ENCODE measurements at regions of chr5 and their contacts with region 1.

Region 1: GRCh38 chr5:59174248-59174844 is 591.5 kb downstream of the RAB3C start:
- DNase-seq: peak; percentile 61

Region 2: DNA sequence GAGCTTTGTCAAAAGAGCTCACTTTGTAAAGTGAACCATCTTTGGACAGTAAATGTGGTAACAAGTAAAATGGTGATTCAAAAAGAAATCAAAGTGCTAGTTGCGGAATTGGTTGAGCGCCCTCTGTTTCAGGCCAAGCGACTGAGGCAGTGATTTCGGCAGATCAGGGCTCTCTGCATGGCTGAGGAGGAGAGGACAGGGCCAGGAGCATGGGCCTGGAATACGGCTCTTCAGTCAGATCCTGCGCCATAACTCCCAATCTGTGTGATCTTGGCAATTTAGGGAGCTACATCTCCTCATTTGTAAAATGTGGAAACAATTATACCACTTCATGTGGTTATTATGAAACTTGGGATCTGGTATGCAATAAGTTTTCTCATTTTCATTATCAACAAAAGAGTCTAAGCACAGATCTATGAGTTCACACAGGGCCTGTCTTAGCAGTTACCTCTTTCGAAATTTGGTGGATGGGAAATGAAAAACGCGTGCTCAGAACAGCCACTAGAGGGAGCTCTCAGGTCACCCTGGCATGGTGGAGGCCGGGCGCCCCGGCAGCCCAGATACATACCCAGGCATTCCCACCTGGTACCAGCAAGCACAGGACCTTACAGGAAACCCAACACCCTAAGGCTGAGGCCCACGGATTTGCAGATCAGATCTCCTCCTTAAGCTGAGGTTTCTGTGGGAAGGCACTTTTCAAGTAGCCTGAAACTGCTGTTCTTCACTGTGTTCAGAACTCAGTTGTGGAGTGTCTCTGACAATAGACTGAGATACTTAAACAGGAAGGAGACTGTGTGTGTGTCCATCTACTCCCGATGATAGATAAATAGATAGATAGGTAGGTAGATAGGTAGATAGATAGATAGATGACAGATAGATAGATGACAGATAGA is 287.8 kb before region 1 on chr5:
- in situ Hi-C with region 1: loop called (anchors 25 kb)
- DNase-seq: peak; percentile 79

Region 3: DNA sequence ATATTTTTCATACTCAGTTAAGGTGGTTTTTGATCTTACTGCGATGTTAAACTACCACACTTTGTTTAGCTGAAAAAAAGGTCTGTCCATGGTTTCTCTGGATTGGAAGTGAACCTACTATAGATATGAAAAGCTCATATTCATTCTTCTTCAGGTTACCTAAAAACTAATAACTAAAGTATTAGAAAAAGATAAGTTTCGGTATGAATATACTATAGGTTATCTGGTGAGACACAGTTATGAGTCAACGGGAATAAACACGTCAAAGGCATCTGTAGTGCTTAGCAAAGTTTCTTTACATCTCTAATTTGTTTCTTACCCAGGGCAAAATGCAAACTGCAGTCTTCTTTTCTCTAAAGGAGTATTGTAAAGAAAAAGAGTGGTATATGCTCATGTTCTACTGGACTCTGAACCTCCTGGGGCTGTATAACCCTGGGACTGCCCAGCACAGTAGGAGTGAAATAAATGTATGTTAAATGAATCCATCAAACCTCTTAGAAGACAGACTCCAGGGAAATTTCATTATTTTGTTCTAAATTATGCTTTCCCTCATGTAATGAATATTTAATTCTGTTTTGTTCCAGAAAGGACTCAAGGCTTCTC is 197.3 kb after region 1 on chr5:
- in situ Hi-C with region 1: no loop called
- DNase-seq: no peak

Region 4: DNA sequence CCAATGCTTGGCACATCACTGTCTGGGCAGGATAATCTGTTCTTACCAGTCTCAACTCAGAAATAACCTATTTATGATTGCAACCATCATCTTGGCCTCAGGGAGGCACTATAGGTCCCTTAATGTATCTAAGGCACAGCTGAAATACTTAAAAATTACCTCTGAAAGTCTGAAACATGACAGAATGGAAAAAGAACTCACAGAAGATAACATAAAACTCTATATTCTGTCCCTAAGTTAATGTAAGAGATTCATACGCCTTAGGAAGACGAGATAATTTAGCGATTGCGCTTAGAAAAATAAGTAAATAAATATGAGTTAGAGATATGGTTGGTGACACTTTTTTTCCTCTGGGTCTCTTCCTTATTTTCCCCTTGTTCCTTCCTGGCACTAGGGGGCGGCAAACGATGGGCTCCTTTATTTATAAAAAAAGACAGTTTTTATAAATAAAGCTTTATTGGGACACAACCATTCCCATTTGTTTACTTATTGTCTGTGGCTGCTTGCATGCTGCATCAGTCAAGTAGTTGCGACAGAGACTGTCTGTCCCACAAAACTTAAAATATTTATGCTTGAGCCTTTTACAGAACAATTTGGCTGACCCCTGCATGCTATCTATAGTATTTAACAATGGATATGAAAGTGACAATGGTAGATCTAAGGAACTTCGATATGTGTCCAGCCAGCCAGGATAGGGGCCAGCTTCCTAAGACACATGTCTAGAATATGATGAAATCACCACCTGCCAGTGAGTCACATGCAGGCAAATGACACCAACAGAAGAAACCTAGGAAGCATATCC is 639.6 kb after region 1 on chr5:
- in situ Hi-C with region 1: no loop called
- DNase-seq: peak; percentile 86

Measured in KBM-7 (cell line).